Activated naive CD4-positive, alpha-beta T cell treated with anti-CD3 and anti-CD28 coated beads for 36 hours (primary cell): ENCODE measurements at regions of chr2 and their contacts with region 1.

Region 1: DNA sequence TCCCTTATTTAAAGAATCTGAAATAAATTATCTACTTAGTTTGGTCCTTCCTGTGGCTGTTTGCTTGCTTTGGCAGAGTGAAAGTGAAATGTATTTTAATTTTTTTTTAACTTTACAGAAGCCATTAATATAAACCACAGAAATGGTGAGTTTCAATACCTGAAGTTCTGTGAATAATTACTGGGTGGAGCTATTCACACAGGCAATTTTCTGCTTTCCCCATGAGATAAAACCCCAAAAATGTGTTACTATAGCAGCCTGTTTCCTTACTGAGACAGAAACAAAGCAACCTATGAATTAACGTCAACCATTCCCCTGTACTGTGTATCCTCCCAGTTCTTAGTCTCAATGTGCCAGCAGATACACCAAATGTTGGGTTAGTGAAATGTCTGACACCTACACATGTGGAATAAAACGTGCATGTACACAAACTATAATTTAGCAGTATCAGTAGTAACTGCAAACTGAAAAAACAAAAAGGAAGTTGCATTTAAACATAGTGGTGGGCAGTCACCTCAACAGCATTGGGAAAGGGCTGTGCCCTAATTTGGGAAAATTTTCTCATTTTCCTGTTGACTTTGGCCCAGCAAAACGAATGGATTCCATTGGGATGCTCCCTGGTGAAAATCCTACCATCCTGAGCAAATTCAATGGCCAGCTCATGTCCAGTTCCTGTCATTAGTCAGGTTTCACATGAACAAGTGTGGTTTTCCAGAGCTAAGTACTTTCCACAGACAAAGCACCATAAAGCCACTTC is 73.1 kb upstream of the RMDN2 start:
- DNase-seq: no peak
- H3K4me3 Mint-ChIP-seq: peak overlapping the region; percentile 17
- H3K27ac Mint-ChIP-seq: peak overlapping the region; percentile 81
- H3K4me1 Mint-ChIP-seq: peaks cover 26% of the 10 kb centered on the region
- H3K27me3 Mint-ChIP-seq: peaks cover 6% of the 10 kb centered on the region

Region 2: GRCh38 chr2:37720533-37721200 is 131.3 kb before region 1 on chr2:
- CTCF ChIA-PET with region 1: no interaction called
- intact Hi-C with region 1: no loop called
- DNase-seq: no peak
- H3K4me3 Mint-ChIP-seq: no peak overlapping the region
- H3K27ac Mint-ChIP-seq: no peak overlapping the region
- H3K4me1 Mint-ChIP-seq: no peaks in the 10 kb centered on the region
- H3K27me3 Mint-ChIP-seq: no peaks in the 10 kb centered on the region

Region 3: DNA sequence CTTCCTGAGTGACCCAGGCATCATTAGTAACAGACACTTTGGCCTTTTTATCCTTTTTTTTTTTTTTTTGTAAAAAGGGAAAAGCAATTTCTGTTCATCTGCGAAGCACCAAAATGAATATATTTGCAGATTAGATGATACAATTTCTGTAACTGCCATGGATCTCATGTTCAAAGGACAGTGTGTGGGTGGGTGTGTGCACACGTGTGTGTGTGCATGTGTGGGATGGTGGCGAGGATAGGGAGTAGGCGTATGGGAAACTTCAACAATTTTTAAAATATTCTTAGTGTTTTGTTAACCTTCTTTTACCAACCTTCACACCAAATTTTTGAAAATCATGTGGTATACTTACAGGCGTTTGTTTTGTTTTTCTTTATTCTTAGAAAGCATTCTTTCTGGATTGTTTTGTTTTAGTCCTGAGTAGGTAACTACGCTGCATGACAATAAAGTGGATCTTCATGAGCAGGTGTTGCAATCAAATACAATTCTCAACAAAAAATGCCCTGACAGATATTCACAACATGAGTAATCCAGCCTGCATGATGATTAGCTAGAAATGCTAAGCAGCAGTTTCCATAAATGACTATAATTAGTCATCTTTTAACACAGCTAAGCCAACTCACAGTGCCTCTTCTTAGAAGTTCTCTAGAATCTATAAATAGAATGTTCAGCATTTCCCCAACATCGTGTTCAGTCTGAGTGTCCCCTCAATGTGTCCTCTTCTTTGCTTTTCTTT is 19.6 kb after region 1 on chr2:
- CTCF ChIA-PET with region 1: interaction called, 29 read pairs
- intact Hi-C with region 1: loop called (anchors 1 kb)
- DNase-seq: no peak
- H3K4me3 Mint-ChIP-seq: peak overlapping the region; percentile 25
- H3K27ac Mint-ChIP-seq: peak overlapping the region; percentile 86
- H3K4me1 Mint-ChIP-seq: peaks cover 30% of the 10 kb centered on the region
- H3K27me3 Mint-ChIP-seq: peaks cover 12% of the 10 kb centered on the region

Region 4: GRCh38 chr2:37925063-37925897 is 73.3 kb after region 1 on chr2 and contains the start of gene RMDN2:
- CTCF ChIA-PET with region 1: no interaction called
- intact Hi-C with region 1: loop called (anchors 2 kb)
- DNase-seq: peak; percentile 83
- H3K4me3 Mint-ChIP-seq: peak within 1 kb of the TSS; percentile 81
- H3K27ac Mint-ChIP-seq: peak within 1 kb of the TSS; percentile 68
- H3K4me1 Mint-ChIP-seq: peaks cover 8% of the 10 kb centered on the region
- H3K27me3 Mint-ChIP-seq: no peaks in the 10 kb centered on the region
- total RNA-seq, gene RMDN2: 0.79 to 1.2 TPM

Region 5: DNA sequence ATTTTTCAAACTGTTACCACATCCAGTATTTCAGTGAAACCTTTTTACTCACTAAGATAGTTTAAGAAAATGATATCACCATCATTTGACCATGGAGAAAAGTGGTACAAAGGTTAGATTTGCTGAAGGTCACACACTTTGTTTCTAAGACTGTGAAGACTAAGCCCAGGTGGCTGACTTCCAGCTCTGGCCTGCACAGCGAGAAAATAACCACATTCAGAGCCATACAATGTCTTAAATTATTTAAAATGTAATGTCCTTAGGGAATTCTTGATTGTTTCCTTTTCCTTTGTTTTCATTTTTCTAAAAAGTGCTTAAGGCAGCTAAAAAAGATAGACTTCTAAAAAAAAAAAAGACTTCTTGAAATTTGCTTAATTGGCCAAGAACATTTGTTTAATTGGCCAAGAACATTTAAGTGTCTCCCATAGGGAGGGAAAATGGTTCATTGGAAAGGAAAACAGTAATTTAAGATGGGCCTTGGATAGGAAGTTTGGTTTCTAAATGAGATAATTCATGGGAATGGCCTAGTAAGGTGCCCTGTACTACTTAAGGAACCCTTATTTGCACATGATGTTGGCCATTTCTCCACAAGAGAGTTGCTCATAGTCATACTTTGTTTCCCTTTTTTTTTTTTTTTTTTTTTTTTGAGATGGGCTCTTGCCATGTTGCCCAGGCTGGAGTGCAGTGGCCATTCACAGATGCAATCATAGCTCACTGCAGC is 178.8 kb after region 1 on chr2:
- CTCF ChIA-PET with region 1: no interaction called
- intact Hi-C with region 1: no loop called
- DNase-seq: no peak
- H3K4me3 Mint-ChIP-seq: no peak overlapping the region
- H3K27ac Mint-ChIP-seq: no peak overlapping the region
- H3K4me1 Mint-ChIP-seq: no peaks in the 10 kb centered on the region
- H3K27me3 Mint-ChIP-seq: peaks cover 6% of the 10 kb centered on the region